ENCODE measurements at regions of chr2 and their contacts with region 1.

Region 1: GRCh38 chr2:42086500-42086953 is 38.7 kb downstream of the PKDCC start:
- DNase-seq: peak in 6 of 7 donors; percentile 41 to 77 (median 57)
- H3K4me3 ChIP-seq: no peak overlapping the region
- H3K27ac ChIP-seq: no peak overlapping the region
- H3K4me1 ChIP-seq: peaks cover 4% of the 10 kb centered on the region in 2 donors
- H3K27me3 ChIP-seq: no peaks in the 10 kb centered on the region
- CTCF ChIP-seq: peak; percentile 45 to 94 (median 89)
- POLR2A ChIP-seq: no peak

Region 2: DNA sequence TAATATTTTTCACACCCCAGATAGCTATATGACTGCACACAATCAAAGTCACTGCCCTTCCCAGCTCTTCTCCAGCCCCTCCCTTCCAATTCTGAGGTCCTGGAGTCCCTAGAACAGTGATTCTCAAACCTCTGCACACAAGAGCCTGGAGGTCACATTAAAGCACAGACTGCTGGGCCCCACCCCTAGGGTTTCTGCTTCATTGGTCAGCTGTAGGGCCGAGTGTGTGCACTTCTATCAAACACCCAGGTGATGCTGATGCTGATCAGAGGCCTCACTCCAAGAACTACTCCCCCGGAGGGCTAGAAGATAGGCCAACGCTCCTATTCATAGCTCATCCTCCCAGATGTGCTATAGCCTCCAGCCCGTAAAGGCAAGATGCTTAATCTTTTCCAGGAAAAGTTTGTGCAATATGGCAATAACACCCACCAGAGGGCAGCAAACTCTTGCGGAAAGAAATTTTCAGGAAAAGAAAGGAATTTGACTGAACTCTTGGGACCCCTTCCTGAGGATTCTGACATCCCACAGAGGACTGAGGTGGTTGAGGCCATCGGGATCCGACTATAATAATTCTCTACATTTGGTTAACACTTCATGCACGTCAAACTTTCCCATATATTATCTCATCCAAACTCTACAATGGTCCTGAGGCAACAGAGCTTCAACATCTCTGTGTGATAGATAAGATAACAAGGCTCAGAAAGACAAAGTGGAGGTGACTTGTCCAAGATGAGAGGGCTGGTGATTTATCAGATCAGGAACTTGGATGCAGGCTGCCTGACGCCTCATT is 232.9 kb before region 1 on chr2:
- intact Hi-C with region 1: loop called (anchors 5 kb)
- DNase-seq: peak; percentile 39 to 83 (median 56)
- H3K4me3 ChIP-seq: no peak overlapping the region
- H3K27ac ChIP-seq: no peak overlapping the region
- H3K4me1 ChIP-seq: no peaks in the 10 kb centered on the region
- H3K27me3 ChIP-seq: no peaks in the 10 kb centered on the region
- CTCF ChIP-seq: peak; percentile 69 to 80 (median 74)
- POLR2A ChIP-seq: no peak

Region 3: DNA sequence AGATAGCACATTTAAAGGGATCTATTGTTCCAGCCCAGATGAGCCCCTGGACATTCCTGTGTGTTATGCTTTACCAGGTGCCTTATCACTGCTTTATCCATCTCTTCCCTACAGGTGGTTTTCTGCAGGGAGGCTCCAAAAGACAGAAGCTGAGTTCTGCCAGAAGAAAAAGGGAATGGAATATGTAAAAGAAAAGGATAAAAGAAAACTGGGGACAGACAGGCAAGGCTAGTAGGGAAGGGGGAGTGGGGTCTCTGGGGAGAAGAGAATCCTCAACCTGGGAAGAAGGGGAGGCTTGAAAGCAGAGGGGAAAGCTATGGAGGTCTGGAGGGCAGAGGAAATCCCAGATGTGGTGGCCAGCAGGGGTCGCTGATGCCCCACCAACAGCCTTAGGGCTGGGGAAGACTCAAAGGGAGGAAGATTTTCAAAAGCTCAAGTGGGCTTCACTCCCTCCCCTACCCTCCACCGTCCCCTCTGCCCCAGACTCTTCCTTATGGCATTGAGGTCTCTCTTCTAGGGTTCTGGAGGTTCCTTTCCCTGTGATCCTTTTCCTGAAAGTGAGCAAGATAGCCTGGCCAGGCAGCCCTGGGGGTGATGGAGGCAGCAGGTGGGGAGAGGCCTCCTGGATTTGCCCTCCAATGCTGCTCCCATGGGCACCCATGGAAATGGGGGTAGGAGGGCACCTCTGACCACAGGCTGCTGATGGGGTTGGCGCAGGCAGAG is 216.8 kb before region 1 on chr2:
- intact Hi-C with region 1: loop called (anchors 1 to 2 kb)
- DNase-seq: peak; percentile 52 to 89 (median 78)
- H3K4me3 ChIP-seq: no peak overlapping the region
- H3K27ac ChIP-seq: peak overlapping the region in 1 of 5 donors; percentile 20
- H3K4me1 ChIP-seq: peaks cover 0 to 5% of the 10 kb centered on the region in 2 donors
- H3K27me3 ChIP-seq: no peaks in the 10 kb centered on the region
- CTCF ChIP-seq: peak; percentile 77 to 94 (median 92)
- POLR2A ChIP-seq: no peak

Region 4: GRCh38 chr2:41933585-41934320 is 152.8 kb before region 1 on chr2:
- intact Hi-C with region 1: no loop called
- DNase-seq: peak in 6 of 7 donors; percentile 63 to 82 (median 79)
- H3K4me3 ChIP-seq: no peak overlapping the region
- H3K27ac ChIP-seq: peak overlapping the region in 4 of 5 donors; percentile 46 to 88 (median 63)
- H3K4me1 ChIP-seq: peaks cover 8 to 33% of the 10 kb centered on the region in 2 donors
- H3K27me3 ChIP-seq: no peaks in the 10 kb centered on the region
- CTCF ChIP-seq: no peak
- POLR2A ChIP-seq: no peak